ENCODE measurements at regions of chr4 and their contacts with region 1.

Region 1: GRCh38 chr4:2761035-2761923 is 5.1 kb upstream of the TNIP2 start:
- DNase-seq: peak; percentile 59
- ATAC-seq: no peak
- H3K4me3 Mint-ChIP-seq: no peak overlapping the region
- H3K27ac Mint-ChIP-seq: no peak overlapping the region
- H3K4me1 Mint-ChIP-seq: peaks cover 12% of the 10 kb centered on the region
- H3K27me3 Mint-ChIP-seq: no peaks in the 10 kb centered on the region
- CTCF ChIP-seq: no peak

Region 2: DNA sequence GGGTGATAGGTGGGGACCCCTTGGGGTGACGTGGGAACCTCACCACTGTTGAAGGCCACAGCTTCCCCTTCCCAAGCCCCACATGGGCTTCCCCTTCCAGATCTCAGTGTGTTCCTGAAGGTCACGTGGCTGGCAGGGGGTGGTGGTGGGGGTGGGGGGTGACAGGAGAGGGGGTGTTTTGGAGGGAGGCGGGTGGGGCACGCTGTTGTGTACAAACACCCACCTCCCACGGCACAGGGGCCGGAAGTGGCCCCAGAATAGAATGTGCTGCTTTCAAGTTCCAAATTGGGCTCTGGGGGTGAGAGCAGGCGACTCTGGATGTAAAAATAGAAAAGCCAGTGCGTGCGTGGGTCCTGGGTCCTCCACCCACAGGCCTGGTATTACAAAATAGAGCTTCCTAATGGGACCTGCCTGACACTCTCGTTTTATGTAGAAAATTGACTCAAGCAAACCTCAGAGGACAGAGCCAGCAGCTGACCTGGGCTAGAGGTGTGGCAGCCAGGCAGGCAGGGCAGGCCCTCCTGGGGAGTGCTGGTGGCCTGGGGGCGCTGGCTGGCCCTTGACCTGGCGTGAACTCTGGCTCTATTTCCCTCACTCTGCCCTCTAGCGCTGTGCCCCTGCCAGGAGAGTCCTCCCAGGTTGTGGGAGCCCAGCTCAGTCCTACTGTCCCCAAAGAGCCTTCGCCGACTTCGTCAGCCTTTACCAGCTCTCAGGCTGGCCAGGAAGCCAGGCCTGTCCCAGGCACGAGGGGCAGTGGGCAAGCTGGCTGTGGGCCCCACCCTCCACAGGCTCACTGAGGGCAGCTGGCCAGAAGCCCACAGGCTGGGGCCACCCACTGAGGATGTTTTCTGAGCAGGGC is 26.2 kb after region 1 on chr4:
- CTCF ChIA-PET with region 1: interaction called, 10 read pairs
- POLR2A ChIA-PET with region 1: interaction called, 5 read pairs
- intact Hi-C with region 1: no loop called
- DNase-seq: peak; percentile 87
- ATAC-seq: peak; percentile 47
- H3K4me3 Mint-ChIP-seq: no peak overlapping the region
- H3K27ac Mint-ChIP-seq: peak overlapping the region; percentile 95
- H3K4me1 Mint-ChIP-seq: peaks cover 50% of the 10 kb centered on the region
- H3K27me3 Mint-ChIP-seq: no peaks in the 10 kb centered on the region
- CTCF ChIP-seq: no peak

Region 3: DNA sequence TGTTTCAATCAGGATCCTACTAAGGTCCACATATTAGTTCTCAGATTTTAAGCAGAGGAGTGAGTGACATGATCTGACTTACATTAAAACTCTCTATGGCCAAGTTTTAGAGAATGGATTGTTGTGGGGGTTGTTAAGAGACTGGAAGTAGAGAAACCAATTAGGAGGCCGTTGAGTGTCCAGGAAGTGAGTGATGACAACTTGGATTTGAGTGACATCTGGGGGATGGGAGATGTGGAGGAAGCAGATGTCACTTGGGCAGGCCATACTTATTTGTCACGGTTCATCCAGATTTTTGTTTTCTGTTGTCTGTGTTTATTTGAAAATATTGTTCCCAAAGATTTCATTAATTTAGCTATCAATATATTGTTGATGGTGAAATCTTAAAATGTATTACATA is 110.6 kb after region 1 on chr4:
- CTCF ChIA-PET with region 1: interaction called, 12 read pairs
- POLR2A ChIA-PET with region 1: interaction called, 3 read pairs
- intact Hi-C with region 1: no loop called
- DNase-seq: peak; percentile 15
- ATAC-seq: peak; percentile 69
- H3K4me3 Mint-ChIP-seq: no peak overlapping the region
- H3K27ac Mint-ChIP-seq: peak overlapping the region; percentile 77
- H3K4me1 Mint-ChIP-seq: peaks cover 63% of the 10 kb centered on the region
- H3K27me3 Mint-ChIP-seq: no peaks in the 10 kb centered on the region
- CTCF ChIP-seq: no peak

Region 4: GRCh38 chr4:2954358-2955185 is 193.3 kb after region 1 on chr4:
- CTCF ChIA-PET with region 1: interaction called, 16 read pairs
- POLR2A ChIA-PET with region 1: no interaction called
- intact Hi-C with region 1: no loop called
- DNase-seq: peak; percentile 87
- ATAC-seq: peak; percentile 80
- H3K4me3 Mint-ChIP-seq: peak overlapping the region; percentile 41
- H3K27ac Mint-ChIP-seq: peak overlapping the region; percentile 93
- H3K4me1 Mint-ChIP-seq: peaks cover 59% of the 10 kb centered on the region
- H3K27me3 Mint-ChIP-seq: no peaks in the 10 kb centered on the region
- CTCF ChIP-seq: no peak

Region 5: DNA sequence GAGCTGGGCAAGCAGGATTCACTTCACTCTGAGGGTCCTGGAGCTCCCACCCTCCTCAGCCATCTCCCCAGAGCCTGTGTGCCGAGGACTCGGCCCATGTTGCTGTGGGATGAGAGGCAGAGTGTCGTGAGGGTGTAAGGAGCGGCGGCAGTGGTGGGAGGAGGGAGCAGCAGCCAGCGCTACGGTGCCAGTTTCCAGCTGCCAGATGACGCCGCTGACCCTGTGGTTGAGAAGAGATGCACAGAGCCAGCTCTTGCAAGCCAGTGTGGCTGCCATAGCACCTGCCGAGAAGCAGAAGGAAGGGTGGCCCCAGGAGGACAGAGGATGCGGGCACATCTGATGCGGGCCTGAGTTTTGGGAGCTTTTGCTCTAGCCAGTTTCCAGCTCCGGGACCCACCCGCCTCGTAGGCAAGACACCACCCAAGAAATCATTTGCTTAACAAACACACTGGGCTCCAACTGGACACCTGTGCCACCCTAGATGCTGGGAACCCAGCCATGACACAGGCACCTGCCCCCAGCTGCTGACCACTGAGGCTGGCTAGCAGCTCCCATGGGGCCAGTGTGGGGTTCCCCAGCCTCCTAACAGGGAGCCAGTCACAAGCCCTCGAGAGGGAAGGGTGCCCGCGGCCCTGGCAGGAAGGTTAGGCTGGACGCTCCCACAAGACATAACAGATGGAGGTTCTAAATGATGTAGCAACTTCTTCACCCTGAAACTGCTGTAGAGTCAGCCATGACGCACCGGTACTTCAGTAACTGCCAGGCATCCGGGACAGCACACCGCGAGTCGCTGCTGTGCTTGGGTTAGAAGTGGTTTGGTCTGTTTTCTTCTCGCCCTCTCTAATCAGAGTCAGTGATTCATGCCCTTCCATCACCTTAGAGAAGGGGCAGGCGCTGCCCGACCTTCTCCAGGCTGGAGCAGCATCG is 496.5 kb after region 1 on chr4:
- CTCF ChIA-PET with region 1: no interaction called
- POLR2A ChIA-PET with region 1: no interaction called
- intact Hi-C with region 1: no loop called
- DNase-seq: no peak
- ATAC-seq: no peak
- H3K4me3 Mint-ChIP-seq: no peak overlapping the region
- H3K27ac Mint-ChIP-seq: no peak overlapping the region
- H3K4me1 Mint-ChIP-seq: no peaks in the 10 kb centered on the region
- H3K27me3 Mint-ChIP-seq: no peaks in the 10 kb centered on the region
- CTCF ChIP-seq: no peak